ENCODE measurements at regions of chr10 and their contacts with region 1.

Region 1: DNA sequence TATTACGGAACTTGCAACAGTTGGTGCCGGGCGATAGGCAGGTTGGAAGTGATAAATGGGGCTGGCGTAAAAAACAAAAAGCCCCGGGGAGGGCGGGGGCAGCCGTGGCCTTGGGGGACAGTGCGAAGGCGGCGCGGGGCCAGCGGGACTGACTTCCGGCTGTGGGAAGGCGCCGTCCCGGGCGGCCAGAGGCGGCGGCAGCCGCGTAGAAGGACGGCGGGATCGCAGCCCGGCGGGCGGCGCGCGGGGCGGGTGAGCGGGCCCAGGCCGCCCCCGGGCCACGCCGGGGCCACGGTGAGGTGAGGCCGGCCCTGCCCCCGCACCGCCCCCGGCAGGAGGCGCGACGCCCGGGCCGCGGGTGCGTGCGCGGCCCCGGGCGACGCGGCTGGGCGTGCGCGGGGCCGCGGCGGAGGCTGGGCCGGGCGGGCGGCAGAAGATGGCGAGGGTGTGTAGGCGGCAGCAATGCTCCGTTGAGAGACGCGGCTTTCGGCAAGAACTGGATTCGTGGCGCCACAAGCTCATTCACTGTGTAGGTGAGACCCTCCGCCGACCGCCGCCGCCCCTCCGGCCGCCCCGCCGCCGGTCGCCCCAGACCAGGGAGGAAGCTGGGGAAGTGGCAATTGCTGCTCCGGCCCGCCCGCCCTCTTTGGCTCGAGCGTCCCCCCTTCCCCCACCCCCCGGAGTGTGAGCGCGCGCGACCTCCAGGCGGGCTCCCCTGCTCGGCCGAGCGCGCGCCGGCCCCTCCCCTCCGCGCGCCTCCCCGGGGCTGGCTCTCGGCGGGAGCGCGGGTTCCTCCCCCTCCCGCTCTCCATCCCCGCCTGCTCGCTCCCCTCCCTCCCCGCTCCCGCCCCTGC is at the start of gene LCOR:
- DNase-seq: peak; percentile 90 to 93
- ATAC-seq: peak; percentile 86 to 90 (median 88)
- H3K4me3 ChIP-seq: peak within 1 kb of the TSS; percentile 87
- H3K27ac ChIP-seq: peak within 1 kb of the TSS; percentile 94
- H3K4me1 ChIP-seq: peaks cover 28% of the 10 kb centered on the region
- H3K27me3 ChIP-seq: no peaks in the 10 kb centered on the region
- CTCF ChIP-seq: no peak
- total RNA-seq, gene LCOR: 13.6 to 30.4 (median 17.0) TPM

Region 2: DNA sequence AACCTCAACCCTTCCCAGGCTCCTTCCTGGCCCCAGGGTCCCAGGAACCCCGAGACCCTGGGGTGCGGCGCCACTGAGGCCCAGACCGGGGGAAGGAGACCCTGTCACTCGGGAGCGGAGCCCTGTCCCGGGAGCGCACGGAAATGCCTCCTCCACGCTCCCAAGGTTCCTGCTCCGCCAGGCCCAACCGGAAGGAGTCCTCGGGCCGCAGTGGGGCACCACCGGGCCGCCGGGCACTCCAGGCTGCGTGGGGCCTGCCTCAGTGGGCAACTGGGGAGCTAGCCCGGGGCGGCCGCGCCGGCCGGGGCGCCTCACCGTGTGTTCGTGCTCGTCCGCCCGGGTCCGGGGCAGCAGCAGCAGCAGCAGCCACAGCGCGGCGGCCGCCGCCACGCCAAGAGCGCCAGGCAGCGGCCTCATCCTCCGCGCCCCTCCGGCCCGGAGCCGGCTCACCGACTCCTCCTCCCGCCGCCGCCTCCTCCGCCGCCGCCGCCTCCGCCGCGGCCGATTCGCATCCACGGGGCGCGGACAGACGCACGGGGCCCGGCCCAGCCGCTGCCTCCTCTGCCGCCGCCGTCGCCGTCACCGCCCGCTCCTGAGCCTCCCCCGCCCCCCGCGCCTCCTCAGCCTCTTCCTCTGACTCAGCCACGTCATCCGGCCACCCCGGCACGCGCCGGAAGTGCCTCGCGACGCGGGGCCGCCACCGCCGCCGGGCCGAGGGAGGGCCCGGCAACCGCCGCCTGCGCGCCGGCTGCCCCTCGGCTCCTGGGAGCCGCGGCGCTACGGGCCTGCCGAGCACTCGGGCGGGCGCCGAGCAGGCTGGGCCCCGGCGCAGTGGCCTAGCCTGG is 245.5 kb before region 1 on chr10 and contains the start of gene TM9SF3:
- intact Hi-C with region 1: loop called in 1 of 2 experiments (anchors 2 kb)
- DNase-seq: peak; percentile 96 to 97
- ATAC-seq: peak; percentile 86 to 89 (median 88)
- H3K4me3 ChIP-seq: peak within 1 kb of the TSS; percentile 96
- H3K27ac ChIP-seq: peak within 1 kb of the TSS; percentile 99
- H3K4me1 ChIP-seq: peaks cover 52% of the 10 kb centered on the region
- H3K27me3 ChIP-seq: no peaks in the 10 kb centered on the region
- CTCF ChIP-seq: no peak
- total RNA-seq, gene TM9SF3: 30.4 to 60.6 (median 57.4) TPM

Region 3: DNA sequence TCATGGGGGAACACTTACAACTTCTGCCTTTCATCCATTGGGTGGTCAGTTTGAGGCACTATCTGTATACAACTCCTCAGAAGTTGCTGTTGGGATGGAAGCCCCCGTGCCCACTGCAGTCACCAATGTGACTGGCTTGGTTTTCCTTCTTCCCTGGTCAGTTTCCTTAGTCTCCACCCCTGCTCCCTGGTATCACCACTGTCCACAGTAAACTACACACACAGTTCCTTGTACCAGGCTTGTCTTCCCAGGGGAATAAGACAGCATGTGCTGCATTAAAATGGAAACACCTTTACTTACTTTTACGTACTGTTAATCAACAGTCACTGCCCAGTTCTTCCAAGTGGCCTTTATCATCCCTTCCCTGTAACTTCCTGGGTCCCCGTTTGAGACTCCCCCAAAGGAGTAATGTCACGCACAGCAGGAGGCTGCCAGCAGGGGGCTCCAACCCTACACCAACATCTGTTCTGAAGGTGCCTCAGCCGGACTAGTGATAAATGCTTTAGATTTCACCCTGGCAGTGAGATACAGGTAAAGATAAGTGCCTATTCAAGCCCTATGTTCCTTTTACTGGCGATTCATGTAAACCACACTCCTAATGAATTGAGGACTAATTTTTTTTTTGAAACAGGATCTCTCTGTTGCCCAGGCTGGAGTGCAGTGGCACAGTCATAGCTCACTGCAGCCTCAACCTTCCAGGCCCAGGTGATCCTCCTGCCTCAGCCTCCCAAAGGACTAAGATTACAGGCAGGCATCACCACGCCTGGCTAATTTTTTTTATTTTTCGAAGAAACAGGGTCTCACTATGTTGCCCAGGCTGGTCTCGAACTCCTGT is 66.5 kb before region 1 on chr10:
- intact Hi-C with region 1: loop called in 1 of 2 experiments (anchors 5 kb)
- DNase-seq: peak; percentile 54 to 77
- ATAC-seq: peak; percentile 52 to 85 (median 76)
- H3K4me3 ChIP-seq: no peak overlapping the region
- H3K27ac ChIP-seq: no peak overlapping the region
- H3K4me1 ChIP-seq: no peaks in the 10 kb centered on the region
- H3K27me3 ChIP-seq: no peaks in the 10 kb centered on the region
- CTCF ChIP-seq: peak; percentile 66

Region 4: DNA sequence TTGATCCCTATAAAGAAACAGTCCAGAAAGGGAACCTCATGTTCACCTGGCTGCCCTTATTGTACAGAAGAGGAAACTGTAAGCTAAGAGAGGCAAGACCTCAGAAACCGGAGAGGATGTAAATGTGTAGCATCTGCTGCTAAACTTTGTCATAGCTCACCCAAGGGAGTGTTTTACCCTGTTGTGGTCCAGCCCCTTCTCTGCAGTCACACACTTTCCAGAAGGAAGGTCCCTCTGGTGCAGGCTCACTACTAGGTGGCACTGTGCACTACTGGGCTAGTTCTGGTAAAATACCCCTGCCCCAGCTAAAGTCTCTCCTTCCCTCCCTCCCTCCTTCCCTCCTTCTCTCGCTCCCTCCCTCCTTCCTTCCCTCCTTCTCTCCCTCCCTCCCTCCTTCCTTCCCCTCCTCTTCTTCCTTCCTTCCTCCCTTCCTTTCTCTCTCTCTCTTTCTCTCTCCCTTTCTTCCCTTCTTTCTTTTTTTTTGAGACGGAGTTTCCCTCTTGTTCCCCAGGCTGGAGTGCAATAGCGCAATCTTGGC is 42.5 kb before region 1 on chr10:
- intact Hi-C with region 1: no loop called
- DNase-seq: no peak
- ATAC-seq: no peak
- H3K4me3 ChIP-seq: no peak overlapping the region
- H3K27ac ChIP-seq: no peak overlapping the region
- H3K4me1 ChIP-seq: no peaks in the 10 kb centered on the region
- H3K27me3 ChIP-seq: no peaks in the 10 kb centered on the region
- CTCF ChIP-seq: no peak

Region 5: DNA sequence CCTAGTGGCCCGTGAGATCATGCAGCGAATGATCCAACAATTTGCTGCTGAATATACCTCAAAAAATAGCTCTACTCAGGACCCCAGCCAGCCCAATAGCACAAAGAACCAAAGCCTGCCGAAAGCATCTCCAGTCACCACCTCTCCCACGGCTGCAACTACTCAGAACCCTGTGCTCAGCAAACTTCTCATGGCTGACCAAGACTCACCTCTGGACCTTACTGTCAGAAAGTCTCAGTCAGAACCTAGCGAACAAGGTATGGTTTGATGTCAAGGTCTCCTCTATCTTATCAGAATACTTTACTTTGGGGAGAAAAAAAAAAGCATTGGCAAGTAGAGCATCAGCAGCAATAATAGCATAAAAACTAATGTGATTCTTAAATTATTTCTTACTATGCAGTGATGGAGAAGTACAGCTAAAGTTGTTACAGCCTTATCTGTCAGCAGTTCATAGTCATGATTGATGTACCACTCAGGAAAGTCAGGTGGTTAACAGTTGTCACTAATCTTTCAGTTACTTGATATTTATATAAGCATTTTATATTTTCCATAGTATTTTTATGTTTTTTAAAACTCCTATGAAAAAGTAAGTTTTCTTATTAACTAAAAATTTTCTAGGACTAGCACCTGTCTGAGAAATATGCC is 117.1 kb after region 1 on chr10:
- intact Hi-C with region 1: loop called in 1 of 2 experiments (anchors 10 kb)
- DNase-seq: no peak
- ATAC-seq: peak; percentile 51 to 66 (median 62)
- H3K4me3 ChIP-seq: no peak overlapping the region
- H3K27ac ChIP-seq: peak overlapping the region; percentile 43
- H3K4me1 ChIP-seq: peaks cover 58% of the 10 kb centered on the region
- H3K27me3 ChIP-seq: no peaks in the 10 kb centered on the region
- CTCF ChIP-seq: no peak